B cell (primary cell): ENCODE measurements at regions of chr9 and their contacts with region 1.

Region 1: DNA sequence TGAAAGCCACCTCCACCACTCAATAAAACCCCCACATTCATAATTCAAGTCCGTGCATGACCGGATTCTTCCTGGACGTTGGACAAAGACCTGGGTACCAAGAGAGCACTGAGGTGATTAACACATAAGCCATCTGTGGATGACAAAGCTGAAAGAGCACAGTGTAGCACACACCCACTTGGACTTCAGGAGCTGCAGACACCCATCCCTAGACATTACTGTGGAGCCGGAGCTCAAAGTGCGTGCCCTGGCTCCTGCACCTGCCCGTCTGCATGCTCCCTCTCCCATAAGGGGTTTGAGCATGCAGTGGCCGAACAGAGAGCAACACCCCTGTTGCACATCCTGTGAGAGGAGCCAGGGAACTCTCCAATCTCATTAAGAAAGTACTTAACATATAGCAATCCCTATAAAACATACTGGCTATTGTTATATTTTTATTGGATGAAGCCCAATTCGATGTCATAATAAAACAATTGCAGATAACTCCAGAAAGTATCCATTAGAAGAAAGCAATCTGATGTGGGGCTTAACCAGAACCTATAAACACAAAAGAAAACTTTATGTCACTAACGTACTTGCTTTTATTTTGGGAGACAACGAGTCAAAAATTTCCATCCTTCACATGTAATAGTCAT is 1174.2 kb upstream of the C9orf72 start:
- DNase-seq: no peak
- ATAC-seq: no peak
- H3K4me3 ChIP-seq: no peak overlapping the region
- H3K4me3 Mint-ChIP-seq: no peak overlapping the region
- H3K27ac ChIP-seq: no peak overlapping the region
- H3K27ac Mint-ChIP-seq: no peak overlapping the region
- H3K4me1 ChIP-seq: no peaks in the 10 kb centered on the region
- H3K4me1 Mint-ChIP-seq: no peaks in the 10 kb centered on the region
- H3K27me3 ChIP-seq: no peaks in the 10 kb centered on the region
- H3K27me3 Mint-ChIP-seq: no peaks in the 10 kb centered on the region
- CTCF ChIP-seq: no peak

Region 2: DNA sequence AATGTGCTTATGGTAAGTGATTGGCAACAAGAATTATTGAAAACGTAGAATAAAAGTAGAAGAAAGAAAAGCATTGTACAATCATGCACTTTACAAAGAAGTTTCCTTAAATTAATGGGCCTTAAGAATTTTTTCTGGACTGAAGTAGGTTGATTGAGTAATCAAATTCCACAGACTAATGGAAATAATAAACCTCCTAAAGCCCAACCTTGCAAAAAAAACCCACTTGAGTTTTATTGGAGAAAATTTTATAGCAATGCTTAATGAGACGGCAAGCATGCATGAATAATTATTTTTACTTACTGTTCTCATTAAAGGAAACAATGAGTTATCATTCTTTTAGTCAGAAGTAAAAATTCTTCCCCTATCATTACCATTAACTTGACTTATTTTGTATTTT is 498.0 kb before region 1 on chr9:
- CTCF ChIA-PET with region 1: no interaction called
- POLR2A ChIA-PET with region 1: no interaction called
- intact Hi-C with region 1: no loop called
- DNase-seq: no peak
- ATAC-seq: no peak
- H3K4me3 ChIP-seq: no peak overlapping the region
- H3K4me3 Mint-ChIP-seq: no peak overlapping the region
- H3K27ac ChIP-seq: no peak overlapping the region
- H3K27ac Mint-ChIP-seq: no peak overlapping the region
- H3K4me1 ChIP-seq: no peaks in the 10 kb centered on the region
- H3K4me1 Mint-ChIP-seq: no peaks in the 10 kb centered on the region
- H3K27me3 ChIP-seq: no peaks in the 10 kb centered on the region
- H3K27me3 Mint-ChIP-seq: no peaks in the 10 kb centered on the region
- CTCF ChIP-seq: no peak

Region 3: DNA sequence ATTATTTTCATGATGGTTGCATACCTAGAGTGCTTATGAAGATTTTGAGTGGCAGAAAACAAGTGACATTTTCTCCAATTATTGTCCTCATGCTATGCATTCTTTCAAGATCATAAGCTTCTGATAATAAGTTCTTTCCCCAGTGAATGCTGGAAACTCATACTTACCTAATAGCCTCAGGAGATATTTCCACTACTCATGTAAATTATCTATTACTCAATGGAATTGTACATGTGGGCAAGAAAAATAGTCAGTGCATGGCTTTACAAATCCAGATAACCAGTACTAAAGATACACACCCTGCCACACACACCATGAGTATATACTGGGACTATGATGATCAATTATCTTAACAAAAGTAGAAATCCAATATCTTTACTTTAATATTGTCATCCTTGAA is 45.3 kb after region 1 on chr9:
- CTCF ChIA-PET with region 1: no interaction called
- POLR2A ChIA-PET with region 1: no interaction called
- intact Hi-C with region 1: loop called (anchors 10 kb)
- DNase-seq: no peak
- ATAC-seq: no peak
- H3K4me3 ChIP-seq: no peak overlapping the region
- H3K4me3 Mint-ChIP-seq: no peak overlapping the region
- H3K27ac ChIP-seq: no peak overlapping the region
- H3K27ac Mint-ChIP-seq: no peak overlapping the region
- H3K4me1 ChIP-seq: no peaks in the 10 kb centered on the region
- H3K4me1 Mint-ChIP-seq: no peaks in the 10 kb centered on the region
- H3K27me3 ChIP-seq: no peaks in the 10 kb centered on the region
- H3K27me3 Mint-ChIP-seq: no peaks in the 10 kb centered on the region
- CTCF ChIP-seq: no peak

Region 4: DNA sequence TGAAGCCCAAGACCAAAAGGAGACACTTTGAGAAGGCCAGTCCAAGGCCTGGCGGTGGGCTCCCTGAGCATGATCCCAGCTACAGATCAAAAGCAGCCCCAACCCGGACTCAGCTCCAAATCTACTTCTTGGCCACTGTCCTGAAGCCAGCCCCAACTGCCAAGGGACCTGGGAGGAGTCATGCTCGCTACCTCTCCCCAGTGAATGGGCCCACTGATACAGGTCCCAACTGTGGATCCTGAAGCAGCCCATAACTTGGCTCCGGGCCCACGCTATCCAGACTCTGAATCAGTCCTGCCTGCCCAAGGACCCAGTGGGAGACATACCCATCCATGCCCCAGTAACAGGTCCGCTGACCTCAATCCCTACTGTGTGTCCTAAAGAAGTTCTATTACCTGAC is 371.1 kb after region 1 on chr9:
- CTCF ChIA-PET with region 1: no interaction called
- POLR2A ChIA-PET with region 1: no interaction called
- intact Hi-C with region 1: no loop called
- DNase-seq: no peak
- ATAC-seq: no peak
- H3K4me3 ChIP-seq: no peak overlapping the region
- H3K4me3 Mint-ChIP-seq: no peak overlapping the region
- H3K27ac ChIP-seq: no peak overlapping the region
- H3K27ac Mint-ChIP-seq: no peak overlapping the region
- H3K4me1 ChIP-seq: no peaks in the 10 kb centered on the region
- H3K4me1 Mint-ChIP-seq: no peaks in the 10 kb centered on the region
- H3K27me3 ChIP-seq: no peaks in the 10 kb centered on the region
- H3K27me3 Mint-ChIP-seq: no peaks in the 10 kb centered on the region
- CTCF ChIP-seq: no peak